Endothelial cell of umbilical vein (primary cell): ENCODE measurements at regions of chr4 and their contacts with region 1.

Region 1: DNA sequence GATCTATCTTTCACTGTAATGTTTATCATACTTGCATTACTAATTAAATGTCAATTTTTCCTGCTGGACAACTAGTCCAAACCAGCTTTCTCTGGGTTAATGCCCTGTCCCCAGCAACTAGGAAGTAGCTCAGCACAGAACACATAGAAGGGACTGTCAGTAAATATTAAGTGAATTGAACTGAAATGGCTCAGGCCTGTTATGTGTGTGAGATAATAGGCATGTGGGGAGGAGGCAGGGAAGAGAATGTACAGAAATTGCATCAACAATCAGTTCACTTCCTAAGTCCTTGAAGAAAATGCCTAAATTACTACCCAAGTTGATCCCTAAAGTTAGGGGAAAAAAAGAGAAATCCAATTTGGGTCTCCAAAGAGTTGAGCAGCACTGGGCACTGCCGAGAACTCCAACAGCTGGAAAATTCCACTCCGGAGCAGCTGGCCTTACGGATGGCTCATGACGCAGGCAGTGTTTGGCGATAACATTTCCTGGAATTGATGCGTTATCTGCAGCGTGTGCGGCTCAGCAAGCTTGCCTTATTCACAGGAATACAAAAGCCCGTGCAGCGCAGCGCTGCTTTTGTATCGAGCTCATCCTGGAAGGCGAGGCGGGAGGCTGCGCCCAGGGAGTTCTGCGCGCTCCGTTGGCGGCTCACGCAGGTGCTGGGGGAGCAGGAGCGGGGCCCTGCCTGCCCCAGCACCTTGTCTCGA is 297.3 kb upstream of the LCORL start:
- DNase-seq: peak; percentile 91
- H3K4me3 ChIP-seq: peak overlapping the region in 2 of 3 experiments; percentile 2 to 25
- H3K27ac ChIP-seq: peak overlapping the region; percentile 16
- H3K4me1 ChIP-seq: peaks cover 9% of the 10 kb centered on the region
- H3K27me3 ChIP-seq: no peaks in the 10 kb centered on the region
- CTCF ChIP-seq: no peak
- POLR2A ChIP-seq: no peak

Region 2: DNA sequence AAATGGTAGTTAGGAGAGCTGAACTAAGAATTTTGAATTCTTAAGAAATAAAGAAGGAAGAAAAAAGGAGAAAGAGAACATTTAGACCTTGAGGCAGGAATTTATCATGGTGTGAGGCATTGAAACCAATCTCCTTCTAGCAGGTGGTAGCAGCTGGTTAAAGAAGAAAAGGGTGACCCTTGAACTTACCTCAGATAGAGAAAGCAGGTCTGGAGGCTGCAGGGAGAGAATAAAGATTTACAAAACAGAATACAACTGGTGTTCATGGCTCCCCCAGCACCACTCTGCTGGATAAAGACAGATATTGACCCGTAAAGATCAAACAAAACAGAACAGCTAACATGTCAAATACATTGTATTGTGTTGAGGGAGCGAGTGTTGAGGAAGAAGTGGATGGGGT is 452.0 kb before region 1 on chr4:
- CTCF ChIA-PET with region 1: no interaction called
- POLR2A ChIA-PET with region 1: no interaction called
- dilution Hi-C with region 1: no loop called
- intact Hi-C with region 1: no loop called
- DNase-seq: no peak
- H3K4me3 ChIP-seq: no peak overlapping the region
- H3K27ac ChIP-seq: no peak overlapping the region
- H3K4me1 ChIP-seq: no peaks in the 10 kb centered on the region
- H3K27me3 ChIP-seq: no peaks in the 10 kb centered on the region
- CTCF ChIP-seq: no peak
- POLR2A ChIP-seq: no peak

Region 3: DNA sequence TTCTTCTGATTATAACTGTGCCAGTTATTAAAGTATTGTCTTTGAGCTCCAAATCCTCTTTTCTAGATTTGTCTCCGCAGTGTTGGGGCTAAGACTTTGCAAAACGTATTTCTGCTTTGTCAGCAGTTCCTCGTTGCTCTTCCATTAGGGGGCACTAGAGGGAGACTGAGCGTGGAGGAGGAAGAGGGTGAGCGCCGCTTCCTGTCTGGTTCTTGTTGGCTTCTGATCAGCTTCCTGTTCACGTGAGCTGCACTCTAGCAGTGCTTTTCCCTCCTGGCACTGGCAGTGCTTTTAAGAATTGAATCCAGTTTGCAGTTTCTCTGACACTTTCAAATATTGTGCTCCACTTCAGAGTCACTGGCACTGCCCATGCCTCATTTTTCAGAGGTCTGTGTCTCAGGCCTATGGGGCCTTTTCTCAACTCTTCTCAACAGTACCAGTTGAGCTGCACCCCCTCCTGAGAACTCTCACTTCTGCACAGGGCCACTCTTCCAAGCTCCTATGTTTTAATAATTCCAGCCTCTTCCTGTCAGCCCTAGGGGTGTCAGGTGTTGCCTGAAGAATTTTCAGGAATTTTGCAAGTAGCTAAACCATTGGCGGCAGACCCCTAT is 242.9 kb before region 1 on chr4:
- CTCF ChIA-PET with region 1: no interaction called
- POLR2A ChIA-PET with region 1: no interaction called
- dilution Hi-C with region 1: no loop called
- intact Hi-C with region 1: loop called (anchors 2 kb)
- DNase-seq: peak; percentile 47
- H3K4me3 ChIP-seq: no peak overlapping the region
- H3K27ac ChIP-seq: no peak overlapping the region
- H3K4me1 ChIP-seq: peaks cover 13% of the 10 kb centered on the region
- H3K27me3 ChIP-seq: peaks cover 4 to 8% of the 10 kb centered on the region in 2 experiments
- CTCF ChIP-seq: peak; percentile 60 to 62
- POLR2A ChIP-seq: no peak

Region 4: GRCh38 chr4:18390655-18391353 is 72.0 kb after region 1 on chr4:
- CTCF ChIA-PET with region 1: no interaction called
- POLR2A ChIA-PET with region 1: no interaction called
- dilution Hi-C with region 1: no loop called
- intact Hi-C with region 1: no loop called
- DNase-seq: no peak
- H3K4me3 ChIP-seq: no peak overlapping the region
- H3K27ac ChIP-seq: no peak overlapping the region
- H3K4me1 ChIP-seq: peaks cover 5% of the 10 kb centered on the region
- H3K27me3 ChIP-seq: peaks cover under 1 to 4% of the 10 kb centered on the region in 2 experiments
- CTCF ChIP-seq: no peak
- POLR2A ChIP-seq: no peak